PC-9 (cell line): ENCODE measurements at regions of chr7 and their contacts with region 1.

Region 1: GRCh38 chr7:3154912-3155494 is 111.3 kb upstream of the CARD11 start:
- DNase-seq: peak; percentile 31 to 60
- H3K4me3 ChIP-seq: no peak overlapping the region
- H3K27ac ChIP-seq: no peak overlapping the region
- H3K4me1 ChIP-seq: peaks cover 14% of the 10 kb centered on the region
- H3K27me3 ChIP-seq: no peaks in the 10 kb centered on the region
- CTCF ChIP-seq: peak; percentile 95

Region 2: GRCh38 chr7:2886900-2887299 is 268.1 kb before region 1 on chr7:
- CTCF ChIA-PET with region 1: interaction called, 14 read pairs
- POLR2A ChIA-PET with region 1: no interaction called
- intact Hi-C with region 1: loop called (anchors 5 kb)
- DNase-seq: peak; percentile 55 to 61
- H3K4me3 ChIP-seq: no peak overlapping the region
- H3K27ac ChIP-seq: no peak overlapping the region
- H3K4me1 ChIP-seq: no peaks in the 10 kb centered on the region
- H3K27me3 ChIP-seq: no peaks in the 10 kb centered on the region
- CTCF ChIP-seq: peak; percentile 92